ENCODE measurements at regions of chr19 and their contacts with region 1.

Region 1: DNA sequence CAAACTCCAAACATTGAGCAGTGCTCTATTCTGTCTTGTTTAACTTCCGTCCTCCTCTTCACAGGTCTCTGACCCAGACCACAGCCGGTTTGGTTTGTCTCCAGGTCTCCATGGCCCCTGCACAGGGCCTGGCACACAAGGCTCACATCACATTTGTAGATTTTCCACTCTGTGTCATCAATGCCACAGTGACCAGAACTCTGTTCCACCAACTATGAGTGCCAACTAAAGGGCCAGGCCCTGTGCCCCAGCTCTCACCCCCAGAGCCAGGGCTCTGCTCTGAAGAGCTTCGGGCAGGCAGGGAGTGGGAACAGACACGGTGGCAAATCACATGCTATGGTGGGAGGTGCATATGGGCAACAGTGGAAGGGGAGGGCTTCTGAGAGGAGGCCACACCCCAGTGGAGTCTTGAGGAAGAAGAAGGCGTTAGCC is 16.0 kb downstream of the SMG9 start:
- DNase-seq: no peak
- H3K4me3 Mint-ChIP-seq: peak overlapping the region; percentile 43
- H3K27ac Mint-ChIP-seq: peak overlapping the region; percentile 94
- H3K4me1 Mint-ChIP-seq: peaks cover 27% of the 10 kb centered on the region
- H3K27me3 Mint-ChIP-seq: no peaks in the 10 kb centered on the region
- CTCF ChIP-seq: no peak

Region 2: DNA sequence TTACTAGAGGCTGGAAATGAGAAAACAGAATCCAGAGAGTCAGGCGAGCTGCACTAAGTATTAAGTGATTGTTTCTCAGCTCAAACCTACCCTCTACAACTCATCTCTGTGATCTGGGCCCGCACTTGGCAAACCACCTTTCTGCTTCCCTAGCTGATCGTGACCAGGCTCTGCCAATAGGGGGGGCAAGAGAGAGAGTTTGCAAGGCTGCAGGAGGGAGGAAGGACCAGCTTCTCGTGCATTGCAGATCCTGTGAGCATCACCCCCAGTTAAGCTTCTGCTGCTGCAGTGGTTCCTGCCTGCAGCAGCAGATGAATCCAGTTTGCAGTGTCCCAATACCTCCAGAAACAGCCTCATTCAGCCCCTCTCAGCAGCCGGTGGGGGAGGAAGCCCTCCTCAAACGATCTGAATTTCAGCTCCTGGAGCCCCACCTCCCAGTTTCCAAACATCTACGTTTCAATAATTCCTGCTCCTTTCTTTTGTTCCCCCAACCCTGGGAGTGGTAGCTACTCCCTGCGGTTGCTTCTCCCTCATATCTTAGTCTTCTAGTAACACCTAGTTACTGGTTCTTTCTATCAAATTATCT is 183.5 kb before region 1 on chr19:
- CTCF ChIA-PET with region 1: no interaction called
- POLR2A ChIA-PET with region 1: no interaction called
- intact Hi-C with region 1: no loop called
- DNase-seq: peak; percentile 81
- H3K4me3 Mint-ChIP-seq: no peak overlapping the region
- H3K27ac Mint-ChIP-seq: no peak overlapping the region
- H3K4me1 Mint-ChIP-seq: no peaks in the 10 kb centered on the region
- H3K27me3 Mint-ChIP-seq: no peaks in the 10 kb centered on the region
- CTCF ChIP-seq: peak; percentile 76

Region 3: GRCh38 chr19:43643326-43643725 is 95.5 kb before region 1 on chr19:
- CTCF ChIA-PET with region 1: no interaction called
- POLR2A ChIA-PET with region 1: no interaction called
- intact Hi-C with region 1: no loop called
- DNase-seq: no peak
- H3K4me3 Mint-ChIP-seq: no peak overlapping the region
- H3K27ac Mint-ChIP-seq: no peak overlapping the region
- H3K4me1 Mint-ChIP-seq: peaks cover 16% of the 10 kb centered on the region
- H3K27me3 Mint-ChIP-seq: peaks cover 26% of the 10 kb centered on the region
- CTCF ChIP-seq: no peak

Region 4: DNA sequence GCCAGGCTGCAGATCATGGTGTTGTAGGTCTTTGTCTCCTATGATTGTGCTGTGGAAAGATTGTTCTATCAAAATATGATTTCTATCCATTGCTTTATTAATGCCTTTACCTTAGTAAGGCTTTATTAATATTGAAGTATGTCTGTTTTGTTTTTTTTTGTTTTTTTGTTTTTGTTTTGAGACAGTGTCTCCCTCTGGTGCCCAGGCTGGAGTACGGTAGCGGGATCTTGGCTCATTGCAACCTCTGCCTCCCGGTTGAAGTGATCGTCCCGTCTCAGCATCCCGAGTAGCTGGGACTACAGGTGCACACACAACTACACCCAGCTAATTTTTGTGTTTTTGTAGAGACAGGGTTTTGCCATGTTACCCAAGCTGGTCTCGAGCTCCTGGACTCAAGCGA is 15.2 kb before region 1 on chr19:
- CTCF ChIA-PET with region 1: no interaction called
- POLR2A ChIA-PET with region 1: interaction called, 15 read pairs
- intact Hi-C with region 1: no loop called
- DNase-seq: peak; percentile 48
- H3K4me3 Mint-ChIP-seq: no peak overlapping the region
- H3K27ac Mint-ChIP-seq: no peak overlapping the region
- H3K4me1 Mint-ChIP-seq: peaks cover 6% of the 10 kb centered on the region
- H3K27me3 Mint-ChIP-seq: no peaks in the 10 kb centered on the region
- CTCF ChIP-seq: peak; percentile 35

Region 5: DNA sequence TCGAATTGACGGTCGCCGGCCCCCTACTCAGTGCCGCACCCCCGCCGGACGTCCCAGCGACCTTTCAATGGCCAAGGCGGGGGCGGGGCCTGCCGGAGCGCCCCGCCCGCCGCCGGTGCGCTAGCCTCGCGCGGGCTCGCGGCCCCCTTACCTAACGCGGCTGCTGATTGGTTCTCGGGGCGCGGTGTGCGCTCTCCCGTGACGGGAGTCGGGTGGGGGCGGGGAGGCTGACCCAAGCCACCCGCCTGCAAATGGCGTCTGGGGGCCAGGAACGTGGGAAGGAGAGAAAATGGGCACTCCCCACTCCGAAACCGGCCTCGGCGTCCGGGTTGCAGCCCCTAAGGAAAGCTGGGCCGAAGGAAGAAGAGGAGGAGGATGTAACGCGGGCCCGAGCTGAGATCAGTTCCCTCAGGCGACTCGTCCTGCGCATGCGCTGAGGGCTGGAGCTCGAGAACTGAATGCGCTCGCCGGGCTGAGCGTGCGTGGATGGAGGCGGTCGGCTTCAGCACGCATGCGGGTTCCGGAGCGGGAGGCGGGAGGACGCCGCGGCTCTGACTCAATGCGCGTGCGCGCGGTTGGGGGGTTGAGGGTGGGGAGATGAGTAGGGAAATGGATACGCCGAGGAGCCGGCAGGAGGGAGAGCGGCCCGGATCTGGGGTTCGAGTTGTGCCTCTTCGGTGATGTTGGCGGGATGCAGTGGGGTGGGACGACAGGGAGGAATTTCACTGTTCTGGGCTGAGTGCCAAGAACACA is 15.9 kb after region 1 on chr19 and contains the start of gene SMG9:
- CTCF ChIA-PET with region 1: interaction called, 4 read pairs
- POLR2A ChIA-PET with region 1: interaction called, 30 read pairs
- intact Hi-C with region 1: no loop called
- DNase-seq: peak; percentile 98
- H3K4me3 Mint-ChIP-seq: peak within 1 kb of the TSS; percentile 93
- H3K27ac Mint-ChIP-seq: peak within 1 kb of the TSS; percentile 98
- H3K4me1 Mint-ChIP-seq: peaks cover 68% of the 10 kb centered on the region
- H3K27me3 Mint-ChIP-seq: no peaks in the 10 kb centered on the region
- CTCF ChIP-seq: no peak
- total RNA-seq, gene SMG9: 76.0 and 76.4 TPM in 2 replicates

Region 6: DNA sequence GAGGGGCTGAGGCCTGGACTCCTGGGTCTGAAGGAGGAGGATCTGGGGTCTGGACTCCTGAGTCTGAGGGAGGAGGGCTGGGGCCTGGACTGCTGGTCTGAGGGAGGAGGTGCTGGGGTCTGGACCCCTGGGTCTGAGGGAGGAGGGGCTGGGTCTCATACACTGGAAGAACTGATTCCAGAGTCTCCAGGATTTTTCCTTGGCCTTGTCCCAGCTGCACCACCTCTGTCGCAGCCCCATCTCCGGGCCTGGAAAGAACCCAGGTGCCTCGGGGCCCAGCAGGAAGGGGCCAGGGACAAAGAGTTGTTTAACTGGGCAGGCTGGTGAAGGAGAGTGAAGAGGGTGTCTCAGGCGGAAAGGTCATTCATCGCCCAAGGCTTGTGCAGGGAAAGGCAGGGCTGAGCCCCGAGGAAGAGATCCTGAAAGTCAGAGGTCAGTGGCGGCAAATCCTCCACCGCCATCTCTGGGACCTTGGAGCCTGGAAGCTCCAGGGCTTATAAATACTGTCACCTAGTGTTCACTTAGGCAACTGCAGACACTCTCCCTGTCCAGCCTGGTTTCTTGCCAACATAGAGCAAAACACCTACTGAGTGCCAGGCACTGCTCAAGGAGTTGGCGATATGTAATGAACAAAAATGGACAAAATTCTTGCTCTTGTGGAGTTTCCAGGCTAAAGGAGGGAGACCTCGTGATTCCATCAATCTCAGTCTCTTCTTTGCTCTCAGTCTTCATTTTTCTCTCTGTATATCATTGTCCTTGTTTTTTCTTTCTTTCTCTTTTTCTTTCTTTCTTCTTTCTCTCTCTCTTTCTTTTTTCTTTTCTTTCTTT is 46.4 kb after region 1 on chr19:
- CTCF ChIA-PET with region 1: interaction called, 19 read pairs
- POLR2A ChIA-PET with region 1: interaction called, 10 read pairs
- intact Hi-C with region 1: no loop called
- DNase-seq: peak; percentile 89
- H3K4me3 Mint-ChIP-seq: peak overlapping the region; percentile 86
- H3K27ac Mint-ChIP-seq: peak overlapping the region; percentile 90
- H3K4me1 Mint-ChIP-seq: peaks cover 63% of the 10 kb centered on the region
- H3K27me3 Mint-ChIP-seq: no peaks in the 10 kb centered on the region
- CTCF ChIP-seq: peak; percentile 92

Region 7: DNA sequence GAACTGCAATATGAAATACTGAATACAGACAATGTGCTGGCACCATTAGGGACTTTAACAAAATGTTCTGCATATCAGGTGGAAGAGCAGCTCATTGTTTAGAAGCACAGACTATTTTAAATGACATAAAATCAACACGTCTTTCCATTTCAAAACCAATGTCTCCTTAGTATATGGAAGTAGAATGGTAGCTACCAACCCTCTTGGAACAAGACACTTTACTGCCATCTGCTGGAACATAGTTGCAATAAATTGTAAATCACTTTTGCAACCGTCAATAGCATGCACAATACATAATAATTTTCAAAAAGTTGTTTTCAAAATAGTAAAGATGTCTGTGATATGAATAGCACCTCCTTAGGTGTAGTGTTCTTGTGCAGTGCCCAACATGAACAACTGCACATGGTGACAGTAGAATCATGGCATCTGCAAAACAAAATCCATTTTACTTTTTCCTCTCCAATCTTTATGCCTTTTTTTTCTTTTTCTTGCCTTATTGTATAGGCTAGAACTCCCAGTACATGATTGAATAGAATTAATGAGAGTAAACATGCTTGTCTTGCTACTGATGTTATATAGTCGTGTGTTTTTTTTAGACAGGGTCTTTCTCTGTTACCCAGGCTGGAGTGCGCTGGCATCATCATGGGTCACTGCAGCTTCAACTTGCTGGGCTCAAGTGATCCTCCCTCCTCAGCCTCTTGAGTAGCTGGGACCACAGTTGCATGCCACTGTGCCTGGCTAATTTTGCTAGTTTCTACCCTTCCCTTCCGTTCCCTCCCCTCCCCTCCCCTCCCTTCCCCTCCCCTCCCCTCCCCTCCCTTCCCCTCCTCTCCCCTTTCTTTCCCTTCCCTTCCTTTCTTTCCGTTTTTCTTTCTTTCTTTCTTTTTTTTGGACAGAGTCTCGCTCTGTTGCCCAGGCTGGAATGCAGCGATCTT is 71.2 kb after region 1 on chr19:
- CTCF ChIA-PET with region 1: interaction called, 41 read pairs
- POLR2A ChIA-PET with region 1: no interaction called
- intact Hi-C with region 1: no loop called
- DNase-seq: peak; percentile 74
- H3K4me3 Mint-ChIP-seq: no peak overlapping the region
- H3K27ac Mint-ChIP-seq: no peak overlapping the region
- H3K4me1 Mint-ChIP-seq: peaks cover 6% of the 10 kb centered on the region
- H3K27me3 Mint-ChIP-seq: peaks cover 11% of the 10 kb centered on the region
- CTCF ChIP-seq: peak; percentile 60

Measured in MCF 10A (cell line).